ENCODE measurements at regions of chr2 and their contacts with region 1.

Region 1: GRCh38 chr2:96463119-96463518 is 42.0 kb downstream of the NEURL3 start:
- DNase-seq: no peak
- H3K4me3 ChIP-seq: no peak overlapping the region
- H3K27ac ChIP-seq: no peak overlapping the region
- H3K4me1 ChIP-seq: no peaks in the 10 kb centered on the region
- H3K27me3 ChIP-seq: no peaks in the 10 kb centered on the region
- CTCF ChIP-seq: no peak
- EP300 ChIP-seq: no peak
- POLR2A ChIP-seq: no peak

Region 2: GRCh38 chr2:97969081-97970067 is 1506.3 kb after region 1 on chr2:
- intact Hi-C with region 1: loop called in 1 of 4 experiments (anchors 5 kb)
- DNase-seq: no peak
- H3K4me3 ChIP-seq: no peak overlapping the region
- H3K27ac ChIP-seq: no peak overlapping the region
- H3K4me1 ChIP-seq: peaks cover 10% of the 10 kb centered on the region
- H3K27me3 ChIP-seq: no peaks in the 10 kb centered on the region
- CTCF ChIP-seq: no peak
- EP300 ChIP-seq: no peak
- POLR2A ChIP-seq: no peak

Measured in ovary (tissue), 10 donors.